Panc1 (cell line): ENCODE measurements at regions of chr9 and their contacts with region 1.

Region 1: DNA sequence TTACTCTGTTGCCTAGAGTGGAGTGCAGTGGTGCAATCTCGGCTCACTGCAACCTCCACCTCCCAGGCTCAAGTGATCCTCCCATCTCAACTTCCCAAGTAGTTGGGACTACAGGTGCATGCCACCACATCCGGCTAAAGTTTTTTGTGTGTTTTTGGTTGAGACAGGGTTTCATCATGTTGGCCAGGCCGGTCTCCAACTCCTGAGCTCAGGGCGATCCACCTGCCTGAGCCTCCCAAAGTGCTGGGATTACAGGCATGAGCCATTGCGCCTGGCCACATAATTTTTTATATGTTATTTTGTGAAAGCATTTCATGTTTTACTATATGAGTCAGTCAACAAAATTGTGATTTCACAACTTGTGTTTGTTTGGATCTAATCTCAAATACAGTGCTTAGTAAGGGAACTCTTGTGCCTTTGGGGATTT is 20.0 kb upstream of the FAM120AOS start:
- DNase-seq: no peak
- ATAC-seq: no peak
- H3K4me3 ChIP-seq: no peak overlapping the region
- H3K27ac ChIP-seq: no peak overlapping the region
- H3K4me1 ChIP-seq: peaks cover 8% of the 10 kb centered on the region
- H3K27me3 ChIP-seq: no peaks in the 10 kb centered on the region
- CTCF ChIP-seq: no peak

Region 2: DNA sequence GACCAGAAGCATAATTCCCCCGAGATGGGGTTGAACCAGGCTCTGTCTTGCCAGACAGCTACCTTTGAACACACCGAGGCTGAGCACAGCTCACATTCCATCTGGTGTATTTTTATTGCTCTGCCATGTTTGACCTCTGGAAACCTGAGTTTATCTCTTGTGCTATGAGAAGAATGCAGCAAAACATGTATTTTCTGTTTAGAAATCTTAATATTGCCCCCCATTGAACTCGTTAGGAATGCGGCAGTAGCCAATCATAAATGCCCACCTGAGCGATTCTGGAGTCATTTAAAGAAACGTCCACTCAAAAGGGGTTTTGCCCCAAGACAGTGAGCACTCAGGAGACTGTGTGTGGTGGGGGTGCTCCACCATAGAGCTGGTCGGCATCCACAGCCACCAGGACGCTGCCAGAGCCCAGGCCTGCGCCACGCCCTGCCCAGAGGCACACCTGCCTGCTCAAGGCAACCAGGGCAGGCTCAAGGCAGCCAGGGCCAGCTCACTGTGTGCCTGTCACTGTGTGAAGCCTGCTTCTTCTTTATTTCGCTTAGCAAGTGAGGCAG is 499.1 kb before region 1 on chr9:
- CTCF ChIA-PET with region 1: no interaction called
- POLR2A ChIA-PET with region 1: no interaction called
- in situ Hi-C with region 1: no loop called
- intact Hi-C with region 1: no loop called
- DNase-seq: no peak
- ATAC-seq: no peak
- H3K4me3 ChIP-seq: no peak overlapping the region
- H3K27ac ChIP-seq: no peak overlapping the region
- H3K4me1 ChIP-seq: no peaks in the 10 kb centered on the region
- H3K27me3 ChIP-seq: no peaks in the 10 kb centered on the region
- CTCF ChIP-seq: no peak

Region 3: GRCh38 chr9:93436655-93437442 is 36.5 kb before region 1 on chr9:
- CTCF ChIA-PET with region 1: no interaction called
- POLR2A ChIA-PET with region 1: no interaction called
- in situ Hi-C with region 1: no loop called
- intact Hi-C with region 1: no loop called
- DNase-seq: no peak
- ATAC-seq: no peak
- H3K4me3 ChIP-seq: no peak overlapping the region
- H3K27ac ChIP-seq: no peak overlapping the region
- H3K4me1 ChIP-seq: no peaks in the 10 kb centered on the region
- H3K27me3 ChIP-seq: no peaks in the 10 kb centered on the region
- CTCF ChIP-seq: no peak

Region 4: DNA sequence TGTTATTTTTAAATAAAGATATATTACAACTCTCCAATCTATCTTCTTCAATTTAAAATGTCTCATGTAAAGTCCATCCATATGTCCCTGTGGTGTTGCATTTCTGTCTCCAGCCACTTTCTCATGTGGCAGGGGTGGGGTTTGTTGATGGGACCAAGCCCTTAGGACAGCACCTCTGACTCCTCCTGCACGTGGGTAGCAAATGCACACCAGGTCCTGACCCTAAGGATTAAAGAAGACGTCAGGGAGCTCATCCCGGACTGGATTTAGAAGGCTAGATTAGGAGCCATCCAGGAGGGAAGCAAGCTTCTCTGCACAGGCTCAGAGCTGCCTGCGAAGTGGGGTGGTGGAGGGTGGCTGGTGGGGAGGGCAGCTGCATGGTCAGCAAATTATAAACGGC is 19.0 kb after region 1 on chr9:
- CTCF ChIA-PET with region 1: interaction called, 17 read pairs
- POLR2A ChIA-PET with region 1: no interaction called
- in situ Hi-C with region 1: no loop called
- intact Hi-C with region 1: no loop called
- DNase-seq: no peak
- ATAC-seq: no peak
- H3K4me3 ChIP-seq: no peak overlapping the region
- H3K27ac ChIP-seq: no peak overlapping the region
- H3K4me1 ChIP-seq: no peaks in the 10 kb centered on the region
- H3K27me3 ChIP-seq: no peaks in the 10 kb centered on the region
- CTCF ChIP-seq: no peak